ENCODE measurements at regions of chr1 and their contacts with region 1.

Region 1: DNA sequence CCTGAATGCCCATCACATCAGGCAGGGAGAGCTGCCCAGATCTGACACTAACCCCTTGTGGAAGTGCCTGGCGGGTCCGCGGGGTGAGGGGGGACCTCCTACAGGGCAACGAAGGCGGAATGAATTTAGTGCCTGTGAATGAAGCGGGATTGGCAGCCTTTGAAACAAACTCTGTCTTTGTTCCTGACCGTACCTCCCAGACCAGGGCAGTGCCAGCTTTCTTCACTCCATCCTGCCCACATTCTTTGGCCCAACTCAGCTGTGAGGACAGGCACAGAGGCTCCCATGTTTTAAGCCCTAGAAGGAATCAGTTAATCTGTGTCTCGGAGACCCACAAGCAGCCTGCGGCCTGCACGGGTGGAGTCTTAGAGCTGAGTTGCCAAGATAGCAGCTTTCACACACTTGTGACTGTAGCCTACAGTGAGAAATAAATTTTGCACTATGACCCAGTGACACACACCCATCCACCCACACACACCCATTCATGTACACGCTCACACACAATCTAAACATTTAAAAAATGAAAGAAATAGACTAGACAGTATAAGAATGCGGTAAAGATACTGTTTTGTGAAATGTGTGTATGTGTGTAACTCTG is 60.1 kb upstream of the USP24 start:
- DNase-seq: no peak
- ATAC-seq: no peak

Region 2: GRCh38 chr1:55138823-55139222 is 136.4 kb before region 1 on chr1:
- intact Hi-C with region 1: loop called (anchors 2 kb)
- DNase-seq: no peak
- ATAC-seq: no peak

Region 3: GRCh38 chr1:55337801-55338447 is 62.7 kb after region 1 on chr1:
- intact Hi-C with region 1: no loop called
- DNase-seq: no peak
- ATAC-seq: no peak

Measured in left ventricle myocardium superior (tissue), 1 donor.